ENCODE measurements at regions of chr11 and their contacts with region 1.

Region 1: DNA sequence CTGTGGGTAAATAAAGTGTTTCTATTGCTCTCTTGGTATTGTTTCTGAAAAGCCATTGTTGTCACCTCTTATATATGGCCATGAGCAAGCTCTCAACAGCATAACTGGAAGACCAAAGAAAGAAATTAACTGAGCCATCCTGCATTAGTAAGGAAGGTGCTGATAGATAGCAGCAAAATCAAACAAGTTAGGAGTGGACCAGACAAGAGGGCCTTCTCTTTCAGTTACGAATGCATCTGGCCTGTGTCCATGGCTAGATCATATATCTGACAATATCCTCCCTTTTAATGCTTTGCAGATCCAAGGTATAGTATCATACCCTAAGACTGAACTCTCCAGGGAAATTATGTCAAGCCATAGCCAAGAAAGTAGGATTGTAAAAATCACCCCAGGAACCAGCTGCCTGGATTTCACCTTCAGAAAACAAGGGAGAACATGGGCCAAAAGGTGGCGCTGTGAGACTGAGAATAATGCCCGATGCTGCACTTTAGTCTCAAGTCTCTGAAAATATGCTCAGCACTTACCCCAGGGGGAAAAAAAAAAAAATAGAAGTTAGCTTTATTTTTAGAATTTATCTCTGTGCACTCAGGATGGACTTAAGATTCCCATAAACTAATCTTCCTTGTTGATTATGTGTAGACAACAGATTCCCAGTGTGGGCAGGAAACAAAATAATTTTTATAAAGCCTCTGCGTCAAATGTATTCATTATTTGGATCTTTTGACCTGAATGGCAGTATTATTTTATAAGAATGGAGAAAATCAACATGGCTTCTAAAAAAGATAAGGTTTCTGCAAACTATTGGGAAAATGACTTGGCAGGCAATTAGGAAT is 415.1 kb downstream of the ETS1 start:
- DNase-seq: peak; percentile 75 to 81 (median 77)
- H3K4me3 ChIP-seq: no peak overlapping the region
- H3K4me3 Mint-ChIP-seq: no peak overlapping the region
- H3K27ac ChIP-seq: no peak overlapping the region
- H3K27ac Mint-ChIP-seq: peak overlapping the region in 1 of 7 donors; percentile 11
- H3K4me1 ChIP-seq: no peaks in the 10 kb centered on the region
- H3K4me1 Mint-ChIP-seq: peaks cover 0 to 4% (median under 1%) of the 10 kb centered on the region in 4 donors
- H3K27me3 ChIP-seq: no peaks in the 10 kb centered on the region
- H3K27me3 Mint-ChIP-seq: no peaks in the 10 kb centered on the region

Region 2: GRCh38 chr11:127042445-127042844 is 1129.8 kb before region 1 on chr11:
- CTCF ChIA-PET with region 1: no interaction called
- POLR2A ChIA-PET with region 1: no interaction called
- intact Hi-C with region 1: no loop called
- DNase-seq: no peak
- H3K4me3 ChIP-seq: no peak overlapping the region
- H3K4me3 Mint-ChIP-seq: no peak overlapping the region
- H3K27ac ChIP-seq: no peak overlapping the region
- H3K27ac Mint-ChIP-seq: no peak overlapping the region
- H3K4me1 ChIP-seq: no peaks in the 10 kb centered on the region
- H3K4me1 Mint-ChIP-seq: no peaks in the 10 kb centered on the region
- H3K27me3 ChIP-seq: no peaks in the 10 kb centered on the region
- H3K27me3 Mint-ChIP-seq: peaks cover 5 to 7% of the 10 kb centered on the region in 2 donors

Region 3: GRCh38 chr11:128061281-128061871 is 110.9 kb before region 1 on chr11:
- CTCF ChIA-PET with region 1: no interaction called
- POLR2A ChIA-PET with region 1: no interaction called
- intact Hi-C with region 1: no loop called
- DNase-seq: no peak
- H3K4me3 ChIP-seq: no peak overlapping the region
- H3K4me3 Mint-ChIP-seq: no peak overlapping the region
- H3K27ac ChIP-seq: no peak overlapping the region
- H3K27ac Mint-ChIP-seq: no peak overlapping the region
- H3K4me1 ChIP-seq: peaks cover 12% of the 10 kb centered on the region
- H3K4me1 Mint-ChIP-seq: peaks cover 0 to 5% (median 3%) of the 10 kb centered on the region in 4 donors
- H3K27me3 ChIP-seq: no peaks in the 10 kb centered on the region
- H3K27me3 Mint-ChIP-seq: no peaks in the 10 kb centered on the region

Region 4: DNA sequence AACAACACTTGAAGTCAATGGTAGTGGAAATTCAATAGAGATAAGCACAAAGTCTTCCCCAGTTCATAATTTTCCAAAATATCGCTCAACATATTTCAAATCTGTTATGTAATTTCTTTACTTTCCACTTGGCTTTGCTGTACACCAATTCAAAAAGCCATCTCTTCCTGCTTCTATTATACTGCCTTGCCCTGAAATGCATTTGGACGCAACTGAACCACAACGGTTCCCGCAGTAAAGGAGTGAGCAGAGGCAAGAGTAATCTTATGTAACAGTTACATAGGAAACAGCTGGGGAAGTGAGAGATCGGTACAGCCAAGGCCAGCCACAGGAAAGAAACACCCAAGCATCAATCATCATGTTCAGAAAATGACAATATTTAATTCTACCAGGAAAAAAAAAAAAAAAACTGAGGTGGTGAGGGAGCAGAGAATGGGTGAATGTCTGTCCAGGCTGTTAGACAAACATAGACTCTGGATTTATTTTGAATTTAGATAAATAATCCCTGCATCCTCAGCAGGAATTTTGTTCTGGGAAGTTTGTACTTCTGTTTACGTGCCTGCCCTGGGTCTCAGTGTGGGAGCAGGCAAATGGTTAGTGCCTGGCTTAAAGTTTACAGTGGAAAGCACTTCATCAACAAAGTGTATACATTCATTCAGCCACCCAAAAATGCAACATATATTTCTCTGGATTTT is 22.9 kb after region 1 on chr11:
- CTCF ChIA-PET with region 1: interaction called, 10 read pairs
- POLR2A ChIA-PET with region 1: no interaction called
- intact Hi-C with region 1: no loop called
- DNase-seq: peak; percentile 66 to 78 (median 76)
- H3K4me3 ChIP-seq: no peak overlapping the region
- H3K4me3 Mint-ChIP-seq: peak overlapping the region; percentile 1 to 67 (median 48)
- H3K27ac ChIP-seq: no peak overlapping the region
- H3K27ac Mint-ChIP-seq: peak overlapping the region; percentile 12 to 93 (median 63)
- H3K4me1 ChIP-seq: peaks cover 18% of the 10 kb centered on the region
- H3K4me1 Mint-ChIP-seq: peaks cover 20 to 38% (median 27%) of the 10 kb centered on the region in 4 donors
- H3K27me3 ChIP-seq: no peaks in the 10 kb centered on the region
- H3K27me3 Mint-ChIP-seq: no peaks in the 10 kb centered on the region

Region 5: DNA sequence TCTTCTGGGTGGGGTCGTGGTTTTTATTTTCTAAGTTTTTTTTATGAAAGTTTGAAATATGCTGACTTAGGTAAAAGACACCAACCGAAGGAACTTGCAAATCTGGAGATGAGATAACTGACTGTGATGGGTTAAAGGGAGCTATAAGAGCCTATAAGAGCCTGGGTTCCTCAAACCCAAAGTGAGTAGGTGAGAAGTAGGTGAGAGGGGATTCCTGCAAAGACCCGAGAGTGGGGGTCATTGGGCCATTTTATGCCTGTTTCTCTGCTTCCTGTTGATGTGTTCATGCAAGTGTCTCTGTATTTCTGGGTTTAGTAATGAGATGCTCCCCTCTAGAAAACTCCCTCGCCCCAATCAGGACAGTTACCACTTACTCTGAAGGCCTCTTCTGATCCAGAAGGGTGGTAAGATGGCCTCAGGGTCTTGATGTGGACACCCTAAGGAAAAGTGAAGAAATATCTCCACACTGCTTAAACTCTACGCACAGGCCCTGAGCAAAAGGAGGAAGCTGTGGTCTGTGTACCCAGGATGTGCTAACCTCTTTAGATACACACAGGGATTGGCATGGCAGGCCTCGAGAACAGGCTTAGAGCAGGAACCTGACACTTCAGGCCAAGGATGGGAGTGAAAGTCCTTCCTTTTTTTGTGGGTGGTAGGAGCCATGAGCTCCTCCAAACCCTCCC is 523.4 kb after region 1 on chr11:
- CTCF ChIA-PET with region 1: no interaction called
- POLR2A ChIA-PET with region 1: interaction called, 3 read pairs
- intact Hi-C with region 1: loop called (anchors 5 kb)
- DNase-seq: peak; percentile 51 to 73 (median 64)
- H3K4me3 ChIP-seq: peak overlapping the region; percentile 77 to 79
- H3K4me3 Mint-ChIP-seq: peak overlapping the region; percentile 94 to 99 (median 96)
- H3K27ac ChIP-seq: peak overlapping the region; percentile 77
- H3K27ac Mint-ChIP-seq: peak overlapping the region; percentile 95 to 99 (median 96)
- H3K4me1 ChIP-seq: peaks cover 59% of the 10 kb centered on the region
- H3K4me1 Mint-ChIP-seq: peaks cover 44 to 84% (median 56%) of the 10 kb centered on the region in 4 donors
- H3K27me3 ChIP-seq: no peaks in the 10 kb centered on the region
- H3K27me3 Mint-ChIP-seq: peaks cover 0 to 6% of the 10 kb centered on the region in 2 donors

Region 6: GRCh38 chr11:128776424-128777284 is 604.4 kb after region 1 on chr11:
- CTCF ChIA-PET with region 1: interaction called, 26 read pairs
- POLR2A ChIA-PET with region 1: no interaction called
- intact Hi-C with region 1: loop called (anchors 1 kb)
- DNase-seq: peak; percentile 43 to 61 (median 56)
- H3K4me3 ChIP-seq: no peak overlapping the region
- H3K4me3 Mint-ChIP-seq: peak overlapping the region in 4 of 8 donors; percentile 21 to 63 (median 36)
- H3K27ac ChIP-seq: no peak overlapping the region
- H3K27ac Mint-ChIP-seq: peak overlapping the region; percentile 62 to 91 (median 81)
- H3K4me1 ChIP-seq: peaks cover 62% of the 10 kb centered on the region
- H3K4me1 Mint-ChIP-seq: peaks cover 56 to 93% (median 72%) of the 10 kb centered on the region in 4 donors
- H3K27me3 ChIP-seq: no peaks in the 10 kb centered on the region
- H3K27me3 Mint-ChIP-seq: no peaks in the 10 kb centered on the region

Region 7: GRCh38 chr11:128841461-128842072 is 669.3 kb after region 1 on chr11:
- CTCF ChIA-PET with region 1: interaction called, 12 read pairs
- POLR2A ChIA-PET with region 1: interaction called, 4 read pairs
- intact Hi-C with region 1: loop called (anchors 1 kb)
- DNase-seq: peak in 4 of 5 donors; percentile 35 to 48 (median 40)
- H3K4me3 ChIP-seq: no peak overlapping the region
- H3K4me3 Mint-ChIP-seq: peak overlapping the region in 7 of 8 donors; percentile 25 to 75 (median 59)
- H3K27ac ChIP-seq: no peak overlapping the region
- H3K27ac Mint-ChIP-seq: peak overlapping the region; percentile 86 to 95 (median 87)
- H3K4me1 ChIP-seq: peaks cover 99% of the 10 kb centered on the region
- H3K4me1 Mint-ChIP-seq: peaks cover 72 to 100% (median 90%) of the 10 kb centered on the region in 4 donors
- H3K27me3 ChIP-seq: no peaks in the 10 kb centered on the region
- H3K27me3 Mint-ChIP-seq: no peaks in the 10 kb centered on the region

Region 8: DNA sequence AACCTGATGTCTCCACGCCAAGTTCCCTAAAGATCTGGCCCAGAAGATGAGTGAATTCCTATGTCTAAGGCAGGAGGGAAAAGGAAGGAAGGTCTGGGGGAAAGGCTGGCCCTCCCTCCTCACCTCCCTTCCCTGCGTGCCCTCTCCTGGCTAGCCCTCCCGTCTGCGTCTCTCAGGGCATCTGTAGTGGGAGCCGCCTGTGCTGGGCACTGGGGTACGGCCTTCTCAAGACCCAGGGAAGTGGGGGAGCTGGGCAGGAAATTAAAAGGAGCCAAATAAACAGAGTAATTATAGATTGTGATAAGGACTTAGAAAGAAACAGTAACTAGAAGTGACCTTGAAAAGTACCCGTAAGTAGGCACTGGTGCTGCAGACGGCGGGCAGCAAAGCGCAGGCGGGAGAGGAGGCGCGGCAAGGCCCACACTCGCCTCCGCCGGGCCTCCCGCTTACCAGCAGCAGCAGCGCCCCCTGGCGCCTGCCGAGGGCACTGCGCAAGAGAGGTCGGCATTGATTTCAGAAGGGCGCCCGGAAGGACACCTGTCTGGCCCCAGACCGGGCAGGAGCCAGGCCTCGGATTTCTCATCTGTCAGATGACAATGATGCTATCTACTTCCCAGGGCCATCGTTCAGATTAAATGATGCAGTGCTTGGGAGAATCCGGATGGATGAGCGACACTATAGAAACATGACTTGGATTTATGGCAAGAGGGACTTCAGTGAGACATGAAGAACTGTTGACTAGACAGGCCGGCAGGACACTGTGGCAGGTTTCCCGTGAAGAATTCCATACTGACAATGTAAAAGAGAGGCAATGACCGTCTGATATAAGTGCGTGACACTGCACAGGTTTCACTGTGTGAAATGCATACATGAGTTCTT is 687.5 kb after region 1 on chr11:
- CTCF ChIA-PET with region 1: interaction called, 26 read pairs
- POLR2A ChIA-PET with region 1: no interaction called
- intact Hi-C with region 1: loop called (anchors 1 kb)
- DNase-seq: peak; percentile 66 to 76 (median 73)
- H3K4me3 ChIP-seq: no peak overlapping the region
- H3K4me3 Mint-ChIP-seq: peak overlapping the region in 2 of 8 donors; percentile 14 to 32
- H3K27ac ChIP-seq: no peak overlapping the region
- H3K27ac Mint-ChIP-seq: peak overlapping the region in 2 of 7 donors; percentile 14 to 71
- H3K4me1 ChIP-seq: no peaks in the 10 kb centered on the region
- H3K4me1 Mint-ChIP-seq: peaks cover 4 to 11% (median 7%) of the 10 kb centered on the region in 4 donors
- H3K27me3 ChIP-seq: no peaks in the 10 kb centered on the region
- H3K27me3 Mint-ChIP-seq: peaks cover 0 to 2% of the 10 kb centered on the region in 2 donors

Measured in CD4-positive, alpha-beta memory T cell (primary cell).